Activated naive CD8-positive, alpha-beta T cell treated with anti-CD3 and anti-CD28 coated beads, Interleukin-2, amount 10 ng/mL, durations not matched to agents 7 days and 5 days (primary cell): ENCODE measurements at regions of chr1 and their contacts with region 1.

Region 1: DNA sequence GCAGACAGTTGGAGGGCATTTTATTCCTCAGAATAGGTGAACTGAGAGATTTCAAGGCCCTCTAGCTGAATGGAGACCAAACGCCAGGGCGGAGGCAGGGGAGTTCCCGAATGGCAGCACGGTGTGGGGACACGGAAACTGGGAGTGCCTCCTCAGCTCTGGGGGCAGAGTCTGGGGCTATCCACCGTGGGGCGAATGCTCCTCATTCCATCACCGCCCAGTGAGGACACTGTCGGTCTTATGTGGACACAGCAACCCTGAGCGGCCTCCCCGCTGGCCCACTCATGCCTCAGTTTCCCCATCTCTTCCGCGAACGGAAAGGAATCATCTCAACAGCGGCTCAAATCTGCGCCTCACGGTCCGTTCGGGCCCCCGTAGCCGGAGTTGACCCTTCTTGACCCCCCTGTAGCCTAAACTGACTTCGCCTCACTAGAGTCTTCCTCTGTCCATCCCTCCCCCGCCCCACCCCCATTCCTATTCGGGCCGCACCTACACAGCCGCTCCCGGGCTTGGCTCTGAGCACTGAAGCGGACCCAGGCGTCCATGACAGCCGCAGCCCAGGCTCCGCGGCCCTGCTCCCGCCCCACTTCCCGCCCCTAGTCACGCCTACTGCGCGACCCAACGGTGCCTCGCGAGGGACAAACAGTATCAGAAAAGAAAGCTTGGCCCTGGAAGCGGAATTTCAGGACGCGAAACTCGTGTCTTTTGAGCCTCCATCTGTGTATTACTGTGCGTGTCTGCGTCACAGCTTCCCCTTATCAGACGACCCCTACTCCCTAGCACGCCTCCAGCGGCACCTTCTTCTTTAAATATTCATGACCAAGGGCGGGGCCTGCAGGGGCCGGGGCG is at the start of gene PEX11B:
- DNase-seq: peak; percentile 93
- ATAC-seq: peak; percentile 88
- H3K4me3 Mint-ChIP-seq: peak within 1 kb of the TSS; percentile 96
- H3K27ac Mint-ChIP-seq: peak within 1 kb of the TSS; percentile 98
- H3K4me1 Mint-ChIP-seq: peaks cover 34% of the 10 kb centered on the region
- H3K27me3 Mint-ChIP-seq: no peaks in the 10 kb centered on the region
- total RNA-seq, gene PEX11B: 31.0 to 35.8 TPM

Region 2: GRCh38 chr1:145957443-145958319 is 39.3 kb after region 1 on chr1 and contains the start of gene LIX1L:
- POLR2A ChIA-PET with region 1: interaction called, 11 read pairs
- DNase-seq: peak; percentile 89
- ATAC-seq: peak; percentile 90
- H3K4me3 Mint-ChIP-seq: peak within 1 kb of the TSS; percentile 99
- H3K27ac Mint-ChIP-seq: peak within 1 kb of the TSS; percentile 94
- H3K4me1 Mint-ChIP-seq: peaks cover 66% of the 10 kb centered on the region
- H3K27me3 Mint-ChIP-seq: no peaks in the 10 kb centered on the region
- total RNA-seq, gene LIX1L: 54.0 to 57.5 TPM

Region 3: DNA sequence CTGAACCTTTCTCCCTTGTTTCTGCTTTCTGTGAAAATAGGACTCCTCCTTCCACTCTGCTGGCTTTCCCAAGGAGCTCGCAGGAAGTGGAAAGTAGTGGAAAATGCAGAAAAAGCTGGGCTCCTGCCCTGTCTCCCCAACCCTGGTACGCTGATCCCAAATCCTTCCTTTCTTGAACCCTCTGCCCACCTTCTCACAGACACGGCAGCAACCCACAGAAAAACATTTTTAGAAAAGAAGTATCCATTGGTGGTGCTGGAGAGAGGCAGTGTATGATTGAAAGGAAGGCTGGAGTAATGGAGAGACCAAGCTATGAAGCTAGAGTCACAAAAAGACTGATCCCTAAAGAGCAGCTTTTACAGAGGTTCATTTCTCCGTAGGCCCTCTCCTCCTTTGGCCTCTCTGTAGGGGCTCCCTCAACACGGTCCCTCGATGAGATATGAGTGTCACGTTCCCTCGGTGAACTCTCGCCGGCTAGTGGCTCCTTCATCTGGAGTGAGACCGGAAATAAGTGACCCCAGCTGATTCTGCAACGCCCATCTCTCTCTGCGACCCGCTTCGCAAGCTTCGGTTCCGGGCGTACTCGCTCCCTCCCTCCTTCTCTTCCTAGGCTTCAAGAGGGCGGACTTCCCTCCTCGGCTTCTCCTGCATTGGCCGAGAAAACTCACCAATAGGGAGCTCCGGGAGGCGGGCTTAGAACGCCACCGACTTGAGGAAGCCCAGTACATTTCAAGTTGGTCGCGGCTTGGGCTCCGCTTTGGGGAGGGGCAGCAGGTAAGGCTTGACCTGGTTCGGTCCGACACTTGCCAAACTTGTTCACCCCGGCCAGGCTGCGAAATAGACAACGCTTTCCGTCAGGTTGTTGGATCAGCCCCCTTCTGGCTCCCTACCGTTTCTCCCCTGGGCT is 45.9 kb after region 1 on chr1 and contains the starts of genes ANKRD34A and POLR3GL:
- POLR2A ChIA-PET with region 1: interaction called, 19 read pairs
- DNase-seq: peak; percentile 85
- ATAC-seq: peak; percentile 89
- H3K4me3 Mint-ChIP-seq: peak within 1 kb of the TSS; percentile 94
- H3K27ac Mint-ChIP-seq: peak within 1 kb of the TSS; percentile 94
- H3K4me1 Mint-ChIP-seq: peaks cover 39% of the 10 kb centered on the region
- H3K27me3 Mint-ChIP-seq: no peaks in the 10 kb centered on the region
- total RNA-seq, gene ANKRD34A: 2.2 to 2.8 TPM
- total RNA-seq, gene POLR3GL: 32.6 to 34.9 TPM

Region 4: GRCh38 chr1:146049436-146049835 is 131.1 kb after region 1 on chr1:
- POLR2A ChIA-PET with region 1: interaction called, 10 read pairs
- DNase-seq: no peak
- ATAC-seq: no peak
- H3K4me3 Mint-ChIP-seq: no peak overlapping the region
- H3K27ac Mint-ChIP-seq: no peak overlapping the region
- H3K4me1 Mint-ChIP-seq: peaks cover 29% of the 10 kb centered on the region
- H3K27me3 Mint-ChIP-seq: no peaks in the 10 kb centered on the region